ENCODE measurements at regions of chr2 and their contacts with region 1.

Region 1: GRCh38 chr2:85327822-85328617 is at the start of gene TGOLN2:
- DNase-seq: peak; percentile 50 to 95
- H3K4me3 ChIP-seq: peak within 1 kb of the TSS; percentile 79 to 83
- H3K27ac ChIP-seq: peak within 1 kb of the TSS; percentile 96 to 99
- H3K4me1 ChIP-seq: peaks cover 12 to 36% of the 10 kb centered on the region in 2 donors
- H3K27me3 ChIP-seq: no peaks in the 10 kb centered on the region
- CTCF ChIP-seq: peak in 2 of 3 experiments; percentile 11 to 12
- total RNA-seq, gene TGOLN2: 111 TPM

Region 2: GRCh38 chr2:85032621-85033020 is 295.4 kb before region 1 on chr2:
- intact Hi-C with region 1: no loop called
- DNase-seq: no peak
- H3K4me3 ChIP-seq: no peak overlapping the region
- H3K27ac ChIP-seq: no peak overlapping the region
- H3K4me1 ChIP-seq: no peaks in the 10 kb centered on the region
- H3K27me3 ChIP-seq: no peaks in the 10 kb centered on the region
- CTCF ChIP-seq: no peak

Region 3: DNA sequence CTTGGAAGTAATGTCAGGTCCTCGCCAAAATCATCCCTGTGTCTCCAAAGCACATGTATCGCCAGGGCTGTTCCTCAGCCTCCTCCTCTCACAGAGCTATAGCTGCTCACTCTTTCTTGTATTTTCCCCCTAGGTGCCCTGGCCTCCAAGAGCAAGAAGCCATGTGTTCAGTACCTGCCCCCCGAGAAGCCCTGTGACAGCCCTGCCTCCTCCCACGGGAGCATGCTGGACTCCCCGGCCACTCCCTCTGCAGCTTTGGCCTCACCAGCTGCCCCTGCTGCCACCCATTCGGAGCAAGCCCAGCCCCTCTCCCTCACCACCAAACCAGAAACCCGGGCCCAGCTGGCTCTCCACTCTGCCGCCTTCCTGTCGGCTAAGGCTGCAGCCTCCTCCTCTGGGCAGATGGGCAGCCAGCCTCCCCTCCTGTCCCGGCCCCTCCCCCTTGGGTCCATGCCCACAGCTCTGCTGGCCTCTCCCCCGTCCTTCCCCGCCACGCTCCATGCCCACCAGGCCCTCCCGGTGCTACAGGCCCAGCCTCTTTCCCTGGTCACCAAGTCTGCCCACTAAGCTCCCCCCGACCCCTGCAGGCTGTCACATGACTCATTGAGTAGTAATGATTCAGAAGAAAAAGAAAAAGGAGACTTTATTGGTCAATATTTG is 19.0 kb before region 1 on chr2:
- intact Hi-C with region 1: no loop called
- DNase-seq: peak in 1 of 2 donors; percentile 79
- H3K4me3 ChIP-seq: no peak overlapping the region
- H3K27ac ChIP-seq: peak overlapping the region; percentile 64 to 66
- H3K4me1 ChIP-seq: peaks cover 4 to 8% of the 10 kb centered on the region in 2 donors
- H3K27me3 ChIP-seq: no peaks in the 10 kb centered on the region
- CTCF ChIP-seq: no peak

Region 4: DNA sequence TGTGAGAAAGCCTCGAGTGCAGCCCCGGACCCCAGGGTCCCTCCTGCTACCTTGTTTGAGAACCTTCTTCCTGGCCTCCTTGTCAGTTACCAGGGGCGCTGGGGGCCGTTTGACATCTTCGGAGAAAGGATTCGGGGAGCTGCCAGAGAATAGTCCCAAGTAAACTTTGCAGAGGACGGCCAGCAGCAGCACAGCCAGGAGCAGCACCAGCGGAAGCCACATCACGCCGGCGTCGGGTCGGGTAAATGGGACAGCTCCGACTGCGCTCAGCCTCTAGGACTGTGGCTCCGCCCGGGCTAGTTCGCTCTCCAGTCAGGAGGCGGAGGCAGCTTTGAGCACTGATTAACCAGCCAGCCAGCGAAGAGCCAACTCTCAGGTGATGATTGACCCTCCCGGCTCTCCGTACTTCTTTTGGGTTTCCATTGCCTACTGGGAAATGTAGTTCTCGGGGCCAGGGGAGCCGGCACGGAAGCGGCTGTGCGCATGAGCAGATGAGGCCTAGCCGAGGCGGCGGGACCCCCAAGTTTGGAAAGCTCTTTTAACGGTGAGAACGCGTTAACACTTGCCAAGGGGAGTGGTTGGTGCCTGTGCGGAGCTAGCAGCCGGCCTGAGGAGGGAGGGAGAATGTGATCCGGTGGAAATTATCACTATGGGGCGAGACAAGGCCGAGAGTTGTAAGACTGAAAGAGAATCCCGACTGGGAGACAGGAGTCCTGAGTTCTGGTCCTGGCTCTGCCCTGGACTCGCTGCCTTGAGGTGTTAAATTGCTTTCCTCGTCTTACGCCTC is 26.5 kb after region 1 on chr2 and contains the starts of genes ELMOD3 and RETSAT:
- intact Hi-C with region 1: loop called (anchors 1 kb)
- DNase-seq: peak; percentile 95 to 100
- H3K4me3 ChIP-seq: peak within 1 kb of the TSS; percentile 81 to 83
- H3K27ac ChIP-seq: peak within 1 kb of the TSS; percentile 80 to 91
- H3K4me1 ChIP-seq: peaks cover 11 to 13% of the 10 kb centered on the region in 2 donors
- H3K27me3 ChIP-seq: no peaks in the 10 kb centered on the region
- CTCF ChIP-seq: no peak
- total RNA-seq, gene ELMOD3: 7.1 TPM
- total RNA-seq, gene RETSAT: 20.6 TPM